Cardiac septum (tissue), 1 donor: ENCODE measurements at regions of chr19 and their contacts with region 1.

Region 1: DNA sequence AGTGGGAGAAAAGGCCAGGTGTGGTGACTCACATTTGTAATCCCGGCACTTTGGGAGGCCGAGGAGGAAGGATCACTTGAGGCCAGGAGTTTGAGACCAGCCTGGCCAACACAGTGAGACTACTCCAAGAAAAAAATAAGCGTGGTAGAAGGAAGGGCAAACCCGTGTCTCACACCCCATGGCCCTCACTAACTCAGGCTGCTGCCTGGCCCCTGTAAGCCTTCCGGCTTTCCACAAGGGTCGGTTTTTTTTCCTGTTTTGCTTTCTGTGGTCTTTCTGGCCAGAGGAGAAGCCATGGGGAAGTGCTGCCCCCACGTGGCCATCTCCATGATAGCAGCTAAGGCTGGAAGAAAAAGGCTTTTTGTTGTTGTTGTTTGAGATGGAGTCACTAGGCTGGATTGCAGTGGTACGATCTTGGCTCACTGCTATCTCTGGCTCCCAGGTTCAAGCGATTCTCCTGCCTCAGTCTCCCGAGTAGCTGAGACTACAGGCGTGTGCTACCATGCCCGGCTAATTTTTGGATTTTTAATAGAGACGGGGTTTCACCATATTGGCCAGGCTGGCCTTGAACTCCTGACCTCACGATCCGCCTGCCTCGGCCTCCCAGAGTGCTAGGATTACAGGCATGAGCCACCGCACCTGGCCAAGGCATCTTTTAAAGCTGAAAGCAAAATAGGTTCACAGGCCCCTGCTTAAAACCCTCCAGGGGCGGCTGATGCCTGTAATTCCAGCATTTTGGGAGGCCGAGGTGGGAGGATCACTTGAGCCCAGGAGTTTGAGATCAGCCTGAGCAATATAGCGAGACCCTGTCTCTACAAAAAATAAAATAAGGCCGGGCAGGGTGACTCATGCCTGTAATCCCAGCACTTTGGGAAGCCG is 7.5 kb upstream of the ARHGEF18 start:
- DNase-seq: peak; percentile 90

Region 2: DNA sequence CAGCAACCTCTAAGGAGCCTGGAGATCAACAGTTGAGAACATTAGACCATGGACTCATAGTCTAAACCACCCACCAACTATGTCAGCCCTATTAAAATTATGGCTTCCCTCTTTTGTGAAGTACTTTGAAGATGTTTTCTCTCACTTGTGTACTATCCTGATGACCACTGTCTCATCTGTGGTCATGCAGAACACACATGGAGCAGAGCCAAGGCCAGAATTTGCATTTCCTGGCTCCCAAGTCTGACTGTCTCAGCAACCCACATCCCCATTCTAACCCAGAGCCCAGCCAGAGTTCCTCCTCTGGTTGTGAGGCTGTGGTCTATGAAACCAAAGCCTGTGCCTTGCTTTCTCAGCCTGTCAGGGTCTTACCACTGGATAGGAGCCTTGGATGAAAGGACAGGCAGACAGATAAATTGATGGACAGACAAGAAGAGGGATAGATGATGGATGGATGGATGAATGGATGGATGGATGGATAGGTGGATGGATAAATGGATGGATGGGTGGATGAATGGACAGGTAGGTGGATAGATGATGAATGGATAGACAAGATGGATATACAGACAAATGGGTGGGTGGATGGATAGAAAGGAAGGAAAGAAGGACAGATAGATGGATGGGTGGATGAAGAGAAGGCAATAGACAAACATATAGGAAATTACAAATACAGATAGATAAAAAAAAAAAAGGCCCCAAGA is 236.3 kb before region 1 on chr19:
- intact Hi-C with region 1: loop called (anchors 1 kb)
- DNase-seq: no peak

Region 3: GRCh38 chr19:7145494-7146485 is 195.4 kb before region 1 on chr19:
- intact Hi-C with region 1: loop called (anchors 2 kb)
- DNase-seq: no peak

Region 4: GRCh38 chr19:7312816-7313215 is 28.4 kb before region 1 on chr19:
- intact Hi-C with region 1: no loop called
- DNase-seq: no peak